ENCODE measurements at regions of chr15 and their contacts with region 1.

Region 1: DNA sequence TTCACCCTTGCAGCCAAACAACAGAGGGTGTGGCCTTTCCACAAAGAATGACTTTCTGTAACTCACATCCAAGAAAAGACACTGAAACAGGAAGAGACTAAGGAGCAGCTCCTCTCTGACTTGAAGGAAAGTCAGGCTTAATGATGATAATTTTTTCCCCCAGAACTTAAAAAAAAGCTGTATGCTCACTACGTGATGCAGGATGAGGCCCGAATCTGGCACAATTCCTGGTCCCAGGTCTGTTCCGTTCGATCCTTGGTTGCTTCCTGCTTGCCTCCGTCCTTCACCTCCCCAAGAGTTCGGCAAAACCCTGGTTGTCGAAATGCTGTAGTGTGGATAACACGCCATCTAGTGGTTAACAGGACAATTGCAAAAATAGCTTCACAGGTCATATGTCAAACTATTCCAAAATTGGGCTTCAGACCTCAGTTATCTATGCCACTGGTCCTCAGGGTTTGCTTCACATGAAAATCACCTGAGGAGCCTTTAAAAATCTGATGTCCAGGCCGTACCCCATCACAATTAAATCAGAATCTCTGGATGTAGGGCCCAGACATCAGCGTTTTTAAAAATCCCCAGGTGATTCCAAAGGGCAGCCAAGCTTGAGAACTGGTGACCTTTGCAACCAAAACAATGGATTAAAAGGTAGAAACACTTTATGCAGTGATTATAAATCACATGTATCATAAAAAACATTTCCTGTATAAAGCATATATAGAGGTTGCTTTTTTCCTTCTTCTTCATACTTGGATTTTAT is 28.1 kb upstream of the SYNM start:
- DNase-seq: peak; percentile 63 to 69
- H3K4me3 ChIP-seq: peak overlapping the region; percentile 19
- H3K4me3 Mint-ChIP-seq: peak overlapping the region; percentile 69
- H3K27ac Mint-ChIP-seq: no peak overlapping the region
- H3K4me1 ChIP-seq: no peaks in the 10 kb centered on the region
- H3K4me1 Mint-ChIP-seq: peaks cover 7% of the 10 kb centered on the region
- H3K27me3 ChIP-seq: no peaks in the 10 kb centered on the region
- H3K27me3 Mint-ChIP-seq: peaks cover 5% of the 10 kb centered on the region
- CTCF ChIP-seq: peak; percentile 76 to 77

Region 2: DNA sequence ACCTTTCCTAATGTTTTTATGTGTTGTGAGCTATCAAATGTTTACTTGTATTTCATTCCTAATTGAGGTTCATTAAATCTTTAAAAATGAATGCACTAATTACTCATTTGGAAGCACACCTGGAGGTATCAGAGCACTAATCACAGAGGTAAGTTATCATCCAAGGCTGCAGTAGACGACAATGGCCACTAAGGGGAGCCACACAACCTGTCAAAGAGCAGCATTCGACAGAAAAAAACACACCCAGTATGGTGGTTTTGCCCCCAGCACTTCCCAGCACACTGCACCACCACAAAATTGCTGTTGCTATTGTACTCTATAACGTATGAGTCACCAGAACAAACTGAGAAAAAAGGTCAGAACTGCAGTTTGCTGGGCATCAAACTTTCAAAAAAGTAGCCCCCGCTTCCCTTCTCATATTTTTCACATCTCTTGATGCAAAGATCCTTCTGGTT is 634.3 kb before region 1 on chr15:
- CTCF ChIA-PET with region 1: no interaction called
- POLR2A ChIA-PET with region 1: no interaction called
- intact Hi-C with region 1: loop called (anchors 1 kb)
- DNase-seq: peak; percentile 69 to 70
- H3K4me3 ChIP-seq: no peak overlapping the region
- H3K4me3 Mint-ChIP-seq: no peak overlapping the region
- H3K27ac Mint-ChIP-seq: no peak overlapping the region
- H3K4me1 ChIP-seq: no peaks in the 10 kb centered on the region
- H3K4me1 Mint-ChIP-seq: no peaks in the 10 kb centered on the region
- H3K27me3 ChIP-seq: no peaks in the 10 kb centered on the region; the same call in 1 of the 2 replicates
- H3K27me3 Mint-ChIP-seq: peaks cover 19% of the 10 kb centered on the region
- CTCF ChIP-seq: peak; percentile 74 to 78

Region 3: GRCh38 chr15:98658831-98659699 is 417.7 kb before region 1 on chr15:
- CTCF ChIA-PET with region 1: no interaction called
- POLR2A ChIA-PET with region 1: no interaction called
- intact Hi-C with region 1: loop called (anchors 10 kb)
- DNase-seq: peak in 1 of 2 experiments; percentile 63
- H3K4me3 ChIP-seq: no peak overlapping the region
- H3K4me3 Mint-ChIP-seq: no peak overlapping the region
- H3K27ac Mint-ChIP-seq: no peak overlapping the region
- H3K4me1 ChIP-seq: peaks cover 12% of the 10 kb centered on the region; the same call in 1 of the 2 replicates
- H3K4me1 Mint-ChIP-seq: peaks cover 20% of the 10 kb centered on the region
- H3K27me3 ChIP-seq: no peaks in the 10 kb centered on the region
- H3K27me3 Mint-ChIP-seq: no peaks in the 10 kb centered on the region
- CTCF ChIP-seq: peak; percentile 79 to 81

Region 4: DNA sequence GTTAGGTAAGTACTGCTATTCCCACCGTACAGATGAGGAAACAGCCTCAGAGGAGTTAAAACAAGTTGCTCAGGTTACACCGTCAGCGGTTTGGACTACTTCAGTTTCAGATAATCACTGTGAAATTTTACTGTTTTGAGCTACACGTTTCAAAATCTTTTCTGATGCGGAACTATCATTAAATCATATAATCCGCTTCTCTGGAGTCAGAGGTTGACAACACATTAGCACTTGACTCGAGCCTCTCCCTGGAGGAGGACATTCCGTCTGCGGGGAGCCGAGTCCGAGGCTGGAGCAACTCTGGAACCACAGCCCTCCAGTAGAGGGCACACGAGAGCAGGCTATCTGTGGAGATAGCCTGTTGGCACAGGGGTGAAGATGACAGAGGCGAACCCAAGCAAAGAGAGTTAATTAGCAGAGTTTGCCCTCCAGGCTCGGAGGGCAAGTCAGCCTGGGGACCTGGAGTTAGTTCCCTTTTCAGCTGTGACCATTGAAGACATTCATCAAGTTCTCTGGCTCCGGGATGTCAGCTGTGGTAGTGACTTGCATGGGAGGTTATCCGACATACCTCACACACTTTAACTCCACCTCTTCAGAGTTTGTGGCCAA is 297.2 kb before region 1 on chr15:
- CTCF ChIA-PET with region 1: no interaction called
- POLR2A ChIA-PET with region 1: no interaction called
- intact Hi-C with region 1: loop called (anchors 1 kb)
- DNase-seq: peak; percentile 75 to 84
- H3K4me3 ChIP-seq: no peak overlapping the region
- H3K4me3 Mint-ChIP-seq: no peak overlapping the region
- H3K27ac Mint-ChIP-seq: peak overlapping the region; percentile 58
- H3K4me1 ChIP-seq: no peaks in the 10 kb centered on the region; the same call in none of the 2 replicates
- H3K4me1 Mint-ChIP-seq: peaks cover 16% of the 10 kb centered on the region
- H3K27me3 ChIP-seq: no peaks in the 10 kb centered on the region
- H3K27me3 Mint-ChIP-seq: no peaks in the 10 kb centered on the region
- CTCF ChIP-seq: peak; percentile 81 to 87

Region 5: DNA sequence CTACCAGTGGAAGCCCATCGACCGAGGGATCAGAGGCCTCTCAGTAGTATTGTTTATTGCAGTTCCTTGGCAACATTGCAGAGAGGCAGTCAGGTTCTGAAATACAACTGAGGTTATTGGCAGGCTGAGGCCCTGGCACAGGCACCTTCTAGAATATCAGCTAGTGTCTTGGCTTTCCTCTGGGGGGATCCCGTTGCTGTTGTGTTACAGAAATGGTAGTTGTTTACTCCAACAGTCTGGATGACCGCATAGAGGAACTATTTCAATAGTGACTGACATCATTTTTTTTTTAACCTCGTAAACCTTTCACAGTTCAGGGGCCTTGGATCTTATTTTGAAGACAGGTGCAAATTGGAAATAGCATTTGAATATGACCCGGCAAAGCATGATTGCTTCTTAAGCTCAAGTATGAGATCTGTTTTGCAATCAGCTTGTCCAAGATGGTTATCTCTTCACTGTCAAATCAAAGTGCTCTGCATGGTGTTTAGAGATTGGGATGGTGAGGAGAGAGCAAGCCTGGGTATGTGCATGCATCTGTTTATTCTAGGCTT is 133.1 kb before region 1 on chr15:
- CTCF ChIA-PET with region 1: no interaction called
- POLR2A ChIA-PET with region 1: no interaction called
- intact Hi-C with region 1: loop called (anchors 5 kb)
- DNase-seq: no peak
- H3K4me3 ChIP-seq: no peak overlapping the region
- H3K4me3 Mint-ChIP-seq: no peak overlapping the region
- H3K27ac Mint-ChIP-seq: no peak overlapping the region
- H3K4me1 ChIP-seq: peaks cover 12% of the 10 kb centered on the region
- H3K4me1 Mint-ChIP-seq: peaks cover 16% of the 10 kb centered on the region
- H3K27me3 ChIP-seq: no peaks in the 10 kb centered on the region
- H3K27me3 Mint-ChIP-seq: no peaks in the 10 kb centered on the region
- CTCF ChIP-seq: no peak

Region 6: DNA sequence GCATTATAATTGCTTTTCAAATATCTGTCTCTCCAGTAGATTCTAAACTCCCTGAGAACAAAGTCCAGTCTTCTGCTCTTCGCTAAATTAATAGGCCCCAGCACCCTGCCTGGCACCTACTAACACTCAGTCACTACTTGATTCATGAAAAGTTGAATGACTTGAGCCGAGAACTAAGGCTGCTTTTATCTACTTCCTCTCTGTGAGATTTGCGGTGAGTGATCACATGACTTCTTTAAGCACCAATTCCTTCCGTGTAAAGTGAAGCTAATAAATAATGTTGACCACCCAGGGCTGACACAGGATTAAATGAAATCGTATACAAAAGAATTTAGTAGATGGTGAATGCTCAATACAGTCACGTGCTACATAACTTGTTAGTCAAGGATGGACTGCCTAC is 24.5 kb before region 1 on chr15:
- CTCF ChIA-PET with region 1: no interaction called
- POLR2A ChIA-PET with region 1: no interaction called
- intact Hi-C with region 1: no loop called
- DNase-seq: no peak
- H3K4me3 ChIP-seq: no peak overlapping the region
- H3K4me3 Mint-ChIP-seq: no peak overlapping the region
- H3K27ac Mint-ChIP-seq: no peak overlapping the region
- H3K4me1 ChIP-seq: no peaks in the 10 kb centered on the region
- H3K4me1 Mint-ChIP-seq: no peaks in the 10 kb centered on the region
- H3K27me3 ChIP-seq: no peaks in the 10 kb centered on the region
- H3K27me3 Mint-ChIP-seq: no peaks in the 10 kb centered on the region
- CTCF ChIP-seq: no peak

Region 7: DNA sequence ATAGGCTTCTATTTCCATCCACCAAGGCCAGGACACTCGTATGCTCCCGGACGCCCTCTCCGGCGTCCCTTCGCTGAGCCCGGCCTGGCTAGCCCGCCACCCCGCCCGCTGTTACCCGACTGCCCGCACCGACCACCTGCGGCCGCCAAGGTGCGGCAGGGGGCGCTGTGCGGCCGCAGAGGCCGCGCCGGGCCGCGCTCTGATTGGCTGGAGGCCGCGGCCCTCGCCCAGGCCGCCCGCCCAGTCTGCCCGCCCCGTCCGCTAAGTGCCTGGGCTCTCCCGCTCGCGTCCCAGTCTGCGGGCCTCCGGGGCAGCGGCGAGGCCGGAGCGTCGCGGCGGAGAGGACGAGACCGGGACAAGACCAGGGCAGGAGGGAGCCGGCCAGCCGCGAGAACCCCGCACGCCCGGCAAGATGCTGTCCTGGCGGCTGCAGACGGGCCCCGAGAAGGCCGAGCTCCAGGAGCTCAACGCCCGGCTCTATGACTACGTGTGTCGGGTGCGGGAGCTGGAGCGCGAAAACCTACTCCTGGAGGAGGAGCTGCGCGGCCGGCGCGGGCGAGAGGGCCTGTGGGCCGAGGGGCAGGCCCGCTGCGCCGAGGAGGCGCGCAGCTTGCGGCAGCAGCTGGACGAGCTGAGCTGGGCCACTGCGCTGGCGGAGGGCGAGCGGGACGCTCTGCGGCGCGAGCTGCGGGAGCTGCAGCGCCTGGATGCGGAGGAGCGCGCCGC is 28.2 kb after region 1 on chr15 and contains the start of gene SYNM:
- CTCF ChIA-PET with region 1: interaction called, 13 read pairs
- POLR2A ChIA-PET with region 1: no interaction called
- intact Hi-C with region 1: no loop called
- DNase-seq: peak; percentile 73 to 88
- H3K4me3 ChIP-seq: peak within 1 kb of the TSS; percentile 46
- H3K4me3 Mint-ChIP-seq: peak within 1 kb of the TSS; percentile 76
- H3K27ac Mint-ChIP-seq: no peak within 1 kb of the TSS
- H3K4me1 ChIP-seq: no peaks in the 10 kb centered on the region
- H3K4me1 Mint-ChIP-seq: no peaks in the 10 kb centered on the region
- H3K27me3 ChIP-seq: no peaks in the 10 kb centered on the region; the same call in 1 of the 2 replicates
- H3K27me3 Mint-ChIP-seq: peaks cover 3% of the 10 kb centered on the region
- CTCF ChIP-seq: peak; percentile 53 to 73
- total RNA-seq, gene SYNM: 6.0 and 6.1 TPM in 2 replicates